Transverse colon (tissue), 4 donors: ENCODE measurements at regions of chr7 and their contacts with region 1.

Region 1: DNA sequence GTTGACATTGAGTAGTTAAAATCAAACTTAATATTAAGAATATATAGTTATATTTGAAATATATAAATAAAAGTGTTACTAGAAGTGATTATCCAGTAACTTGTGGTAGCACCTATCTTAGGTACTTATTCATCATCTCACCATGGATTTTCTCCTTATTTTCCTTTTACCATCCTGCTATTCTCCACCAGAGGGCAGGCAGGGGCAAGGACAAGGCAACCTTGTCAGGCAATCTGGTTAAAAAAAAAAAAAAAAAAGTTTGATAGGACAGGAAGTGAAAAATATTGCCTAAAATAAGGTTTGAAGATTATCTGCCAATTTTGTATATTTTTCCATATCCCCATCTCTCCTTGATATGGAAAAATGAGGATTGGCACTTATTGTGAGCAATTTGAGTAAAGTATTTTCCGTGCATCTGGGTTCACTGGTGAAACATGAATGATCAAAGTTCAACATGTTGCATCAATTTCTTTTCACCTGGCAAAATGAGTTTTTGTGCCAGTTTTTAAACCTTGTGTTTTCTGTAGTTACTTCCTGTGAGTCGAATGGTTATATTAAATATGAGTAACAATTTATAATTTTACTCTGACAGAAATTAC is 256.7 kb downstream of the AGMO start:
- DNase-seq: peak; percentile 23
- H3K4me3 ChIP-seq: no peak overlapping the region
- H3K27ac ChIP-seq: no peak overlapping the region
- H3K4me1 ChIP-seq: no peaks in the 10 kb centered on the region
- H3K27me3 ChIP-seq: no peaks in the 10 kb centered on the region
- CTCF ChIP-seq: peak; percentile 61 to 73 (median 68)
- EP300 ChIP-seq: no peak
- POLR2A ChIP-seq: no peak

Region 2: GRCh38 chr7:15720849-15721471 is 415.9 kb after region 1 on chr7:
- in situ Hi-C with region 1: loop called in 3 of 4 experiments (anchors 10 to 25 kb)
- intact Hi-C with region 1: no loop called
- DNase-seq: peak; percentile 32
- H3K4me3 ChIP-seq: no peak overlapping the region
- H3K27ac ChIP-seq: no peak overlapping the region
- H3K4me1 ChIP-seq: no peaks in the 10 kb centered on the region
- H3K27me3 ChIP-seq: no peaks in the 10 kb centered on the region
- CTCF ChIP-seq: peak; percentile 65 to 80 (median 67)
- EP300 ChIP-seq: no peak
- POLR2A ChIP-seq: no peak

Region 3: GRCh38 chr7:16062269-16062668 is 757.2 kb after region 1 on chr7:
- in situ Hi-C with region 1: loop called in 2 of 4 experiments (anchors 25 kb)
- intact Hi-C with region 1: loop called (anchors 10 kb)
- DNase-seq: no peak
- H3K4me3 ChIP-seq: no peak overlapping the region
- H3K27ac ChIP-seq: no peak overlapping the region
- H3K4me1 ChIP-seq: peaks cover 0 to 6% (median 2%) of the 10 kb centered on the region in 4 donors
- H3K27me3 ChIP-seq: no peaks in the 10 kb centered on the region
- CTCF ChIP-seq: no peak
- EP300 ChIP-seq: no peak
- POLR2A ChIP-seq: no peak

Region 4: GRCh38 chr7:16071246-16071857 is 766.3 kb after region 1 on chr7:
- in situ Hi-C with region 1: loop called (anchors 10 to 25 kb)
- intact Hi-C with region 1: loop called (anchors 10 kb)
- DNase-seq: peak; percentile 10
- H3K4me3 ChIP-seq: no peak overlapping the region
- H3K27ac ChIP-seq: no peak overlapping the region
- H3K4me1 ChIP-seq: peaks cover 0 to 4% (median 0%) of the 10 kb centered on the region in 4 donors
- H3K27me3 ChIP-seq: no peaks in the 10 kb centered on the region
- CTCF ChIP-seq: peak; percentile 79 to 90 (median 84)
- EP300 ChIP-seq: no peak
- POLR2A ChIP-seq: no peak

Region 5: GRCh38 chr7:16078076-16078952 is 773.2 kb after region 1 on chr7:
- in situ Hi-C with region 1: loop called (anchors 10 to 25 kb)
- intact Hi-C with region 1: no loop called
- DNase-seq: no peak
- H3K4me3 ChIP-seq: no peak overlapping the region
- H3K27ac ChIP-seq: no peak overlapping the region
- H3K4me1 ChIP-seq: peaks cover 0 to 4% (median 1%) of the 10 kb centered on the region in 4 donors
- H3K27me3 ChIP-seq: no peaks in the 10 kb centered on the region
- CTCF ChIP-seq: peak; percentile 58 to 74 (median 64)
- EP300 ChIP-seq: no peak
- POLR2A ChIP-seq: no peak